ENCODE measurements at regions of chr11 and their contacts with region 1.

Region 1: DNA sequence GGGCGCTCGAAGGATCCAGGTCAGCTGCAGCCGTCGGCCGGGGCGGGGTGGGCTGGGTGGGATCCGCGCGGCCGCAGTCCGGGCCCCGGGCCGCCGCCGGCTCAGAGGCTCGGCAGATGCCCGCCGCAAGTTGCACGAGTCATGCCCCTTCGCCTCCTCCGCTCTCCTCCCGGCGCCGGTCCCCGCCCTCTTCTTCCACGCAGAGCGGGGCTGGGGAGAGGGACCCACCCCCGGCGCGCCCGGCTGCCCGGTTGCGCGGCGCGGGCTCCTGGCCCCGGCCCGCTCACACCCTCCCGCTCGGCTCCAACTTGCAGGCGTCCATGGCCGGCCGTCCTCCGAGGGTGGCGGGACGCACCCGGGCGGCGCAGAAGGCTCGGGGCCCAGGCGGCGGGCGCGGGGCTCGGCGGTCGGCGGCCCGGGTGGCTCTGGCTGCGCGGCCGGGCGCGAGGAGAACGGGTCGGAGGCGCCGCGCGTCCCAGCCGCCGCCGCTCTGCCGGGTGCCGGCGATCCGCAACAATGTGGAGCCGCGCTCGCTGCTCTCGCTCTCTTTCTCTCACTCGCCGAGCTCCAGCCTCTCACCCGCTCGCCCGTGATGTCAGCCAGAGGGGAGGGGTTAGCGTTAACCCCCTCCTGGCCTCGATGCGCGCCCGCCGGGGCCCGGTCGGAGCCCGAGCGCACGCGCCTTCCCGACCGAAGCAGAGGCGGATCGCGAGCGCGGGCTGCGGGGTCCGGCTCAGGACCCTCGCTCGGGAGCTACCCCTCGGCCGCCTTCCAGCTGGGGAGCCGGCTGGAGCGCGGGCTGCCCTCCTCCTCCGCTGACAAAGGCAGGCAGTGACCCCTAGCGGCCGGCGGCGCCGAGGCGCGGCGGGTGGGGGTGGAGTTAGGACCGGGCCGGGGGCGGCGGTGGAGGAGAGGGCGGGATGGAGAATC is at the start of gene NECTIN1:
- DNase-seq: peak; percentile 90 to 91
- ATAC-seq: peak; percentile 91 to 96 (median 94)
- H3K4me3 ChIP-seq: peak within 1 kb of the TSS; percentile 64 to 93 (median 80)
- H3K27ac ChIP-seq: peak within 1 kb of the TSS; percentile 75 to 91 (median 84)
- H3K4me1 ChIP-seq: peaks cover 3 to 36% (median 32%) of the 10 kb centered on the region in 9 donors
- H3K27me3 ChIP-seq: peaks cover 0 to 14% (median 0%) of the 10 kb centered on the region in 7 donors
- CTCF ChIP-seq: peak; percentile 94 to 100 (median 99)
- total RNA-seq, gene NECTIN1: 6.6 to 22.8 (median 11.6) TPM

Region 2: DNA sequence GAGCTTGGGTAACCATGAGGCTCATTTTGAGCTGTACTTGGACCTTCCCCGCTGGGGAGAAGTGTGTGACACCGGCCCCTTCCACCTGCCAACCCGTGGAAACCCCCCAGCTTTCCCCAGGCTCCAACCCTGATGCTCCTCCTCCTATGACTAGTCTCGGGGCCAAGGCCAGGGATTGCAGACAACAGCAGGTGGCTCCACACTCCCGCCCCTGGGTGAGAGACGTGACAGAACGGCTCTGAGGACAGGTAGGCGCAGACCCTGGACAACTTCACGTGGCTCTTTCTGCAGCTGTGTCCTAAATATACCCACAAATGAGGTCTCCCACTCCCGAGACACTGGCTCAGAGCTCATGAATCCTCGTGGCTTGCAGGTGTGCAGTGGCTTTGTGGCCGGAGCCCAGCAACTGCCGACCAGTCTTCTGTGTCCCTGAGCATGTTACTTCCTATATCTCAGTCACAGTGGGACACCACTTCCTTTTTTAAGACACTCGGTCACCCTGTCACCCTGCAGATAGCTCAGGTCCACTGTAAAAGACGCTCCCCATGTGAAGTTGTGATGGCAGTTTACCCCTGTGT is 55.1 kb before region 1 on chr11:
- intact Hi-C with region 1: loop called in 5 of 10 experiments (anchors 5 kb)
- DNase-seq: no peak
- ATAC-seq: no peak
- H3K4me3 ChIP-seq: no peak overlapping the region
- H3K27ac ChIP-seq: no peak overlapping the region
- H3K4me1 ChIP-seq: peaks cover 8 to 41% (median 27%) of the 10 kb centered on the region in 9 donors
- H3K27me3 ChIP-seq: no peaks in the 10 kb centered on the region
- CTCF ChIP-seq: peak in 1 of 9 donors; percentile 4

Region 3: GRCh38 chr11:119684361-119685110 is 44.4 kb before region 1 on chr11:
- intact Hi-C with region 1: loop called in 5 of 10 experiments (anchors 5 kb)
- DNase-seq: no peak
- ATAC-seq: peak in 4 of 8 donors; percentile 25 to 51 (median 40)
- H3K4me3 ChIP-seq: no peak overlapping the region
- H3K27ac ChIP-seq: no peak overlapping the region
- H3K4me1 ChIP-seq: peaks cover 3 to 40% (median 27%) of the 10 kb centered on the region in 9 donors
- H3K27me3 ChIP-seq: no peaks in the 10 kb centered on the region
- CTCF ChIP-seq: no peak

Region 4: GRCh38 chr11:120013325-120014270 is 284.7 kb after region 1 on chr11:
- intact Hi-C with region 1: loop called in 3 of 10 experiments (anchors 5 to 10 kb)
- DNase-seq: peak; percentile 42 to 53
- ATAC-seq: peak; percentile 76 to 89 (median 83)
- H3K4me3 ChIP-seq: no peak overlapping the region
- H3K27ac ChIP-seq: no peak overlapping the region
- H3K4me1 ChIP-seq: peaks cover 0 to 6% (median 0%) of the 10 kb centered on the region in 9 donors
- H3K27me3 ChIP-seq: peaks cover 0 to 83% (median 59%) of the 10 kb centered on the region in 7 donors
- CTCF ChIP-seq: peak; percentile 33 to 76 (median 72)

Region 5: GRCh38 chr11:120108154-120108865 is 379.4 kb after region 1 on chr11:
- intact Hi-C with region 1: loop called in 5 of 10 experiments (anchors 5 to 10 kb)
- DNase-seq: peak; percentile 48 to 71
- ATAC-seq: peak; percentile 77 to 94 (median 86)
- H3K4me3 ChIP-seq: no peak overlapping the region
- H3K27ac ChIP-seq: no peak overlapping the region
- H3K4me1 ChIP-seq: no peaks in the 10 kb centered on the region
- H3K27me3 ChIP-seq: peaks cover 0 to 36% (median 13%) of the 10 kb centered on the region in 7 donors
- CTCF ChIP-seq: peak; percentile 94 to 100 (median 99)

Measured in heart right ventricle (tissue), 16 donors.